ENCODE measurements at regions of chr15 and their contacts with region 1.

Region 1: GRCh38 chr15:29449136-29449535 is 179.5 kb upstream of the NSMCE3 start:
- DNase-seq: no peak
- H3K4me3 ChIP-seq: no peak overlapping the region
- H3K27ac ChIP-seq: no peak overlapping the region
- H3K4me1 ChIP-seq: no peaks in the 10 kb centered on the region
- H3K27me3 ChIP-seq: no peaks in the 10 kb centered on the region
- CTCF ChIP-seq: no peak
- EP300 ChIP-seq: no peak
- POLR2A ChIP-seq: no peak

Region 2: DNA sequence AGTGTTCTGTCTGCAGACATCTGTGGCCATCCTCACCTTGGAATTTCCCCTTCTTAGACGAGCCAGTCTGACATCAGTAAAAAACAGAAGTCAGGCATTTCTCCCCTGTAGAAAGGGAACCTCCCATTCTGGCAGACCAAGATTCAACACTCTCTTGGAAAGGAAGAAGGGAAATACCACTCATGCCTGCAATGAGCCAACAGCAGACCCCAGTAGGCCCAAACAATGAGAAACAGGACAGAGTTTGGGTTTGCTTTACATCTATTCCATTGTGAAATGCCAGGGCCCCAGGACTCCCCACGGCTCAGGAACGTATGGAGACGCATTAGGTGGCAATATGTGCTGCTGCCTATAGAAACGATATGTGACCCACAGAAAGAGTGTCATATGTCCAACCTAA is 84.5 kb after region 1 on chr15:
- in situ Hi-C with region 1: no loop called
- intact Hi-C with region 1: loop called (anchors 5 kb)
- DNase-seq: no peak
- H3K4me3 ChIP-seq: no peak overlapping the region
- H3K27ac ChIP-seq: no peak overlapping the region
- H3K4me1 ChIP-seq: no peaks in the 10 kb centered on the region
- H3K27me3 ChIP-seq: no peaks in the 10 kb centered on the region
- CTCF ChIP-seq: no peak
- EP300 ChIP-seq: no peak
- POLR2A ChIP-seq: no peak

Measured in transverse colon (tissue), 4 donors.